ENCODE measurements at regions of chr1 and their contacts with region 1.

Region 1: GRCh38 chr1:206912445-206913095 is 9.2 kb downstream of the FCMR start:
- DNase-seq: peak; percentile 81
- H3K4me3 ChIP-seq: no peak overlapping the region; a peak in 1 of 4 replicates
- H3K27ac ChIP-seq: no peak overlapping the region
- H3K4me1 ChIP-seq: peaks cover 0 to 10% of the 10 kb centered on the region in 2 experiments; a peak in 1 of 4 replicates
- H3K27me3 ChIP-seq: peaks cover 43% of the 10 kb centered on the region
- CTCF ChIP-seq: peak; percentile 81
- EP300 ChIP-seq: no peak
- RAD21 ChIP-seq: peak; percentile 92

Region 2: DNA sequence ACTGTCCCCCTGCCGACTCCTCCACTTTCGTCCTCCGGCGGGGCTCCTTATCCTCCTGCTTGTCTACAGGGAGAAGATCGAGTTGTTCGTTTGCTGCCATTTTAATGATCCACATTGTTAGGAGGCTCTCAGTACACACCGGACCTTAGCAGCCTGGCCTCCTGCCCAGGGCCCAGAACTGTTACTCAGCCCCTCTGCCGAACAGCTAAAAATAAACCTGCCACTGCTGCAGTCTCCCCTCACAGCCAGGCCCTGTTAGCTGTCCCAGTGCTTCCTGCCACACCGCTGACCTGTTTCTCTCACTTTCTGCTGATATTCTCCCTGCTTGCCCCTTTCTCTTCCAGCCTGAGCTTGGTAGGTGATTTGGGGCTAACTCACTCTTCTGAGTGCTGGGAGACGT is 219.5 kb before region 1 on chr1:
- CTCF ChIA-PET with region 1: interaction called, 12 read pairs
- POLR2A ChIA-PET with region 1: no interaction called
- DNase-seq: no peak
- H3K4me3 ChIP-seq: no peak overlapping the region
- H3K27ac ChIP-seq: peak overlapping the region; percentile 45 to 69
- H3K4me1 ChIP-seq: peaks cover 43 to 51% of the 10 kb centered on the region in 2 experiments
- H3K27me3 ChIP-seq: no peaks in the 10 kb centered on the region
- CTCF ChIP-seq: no peak
- EP300 ChIP-seq: no peak
- RAD21 ChIP-seq: no peak

Region 3: DNA sequence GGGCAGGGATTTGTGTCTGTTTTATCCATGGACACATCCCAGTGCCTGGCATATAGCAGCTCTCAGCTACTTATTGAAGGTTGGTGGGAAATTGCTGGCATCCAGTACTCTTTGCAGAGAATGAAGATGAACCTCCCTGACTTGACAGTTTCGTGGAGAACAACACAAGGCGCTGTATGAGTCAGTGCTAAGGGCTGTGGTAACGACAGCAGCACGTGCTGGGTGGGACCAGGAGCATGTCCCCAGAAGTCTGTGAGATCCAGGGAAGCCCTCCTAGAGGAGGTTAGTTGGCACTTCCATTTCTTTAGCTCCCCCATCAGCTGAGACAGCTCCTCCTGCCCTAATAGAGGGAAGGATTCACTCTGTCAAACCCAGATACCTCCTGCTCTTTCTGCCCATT is 167.9 kb before region 1 on chr1:
- CTCF ChIA-PET with region 1: interaction called, 35 read pairs
- POLR2A ChIA-PET with region 1: no interaction called
- DNase-seq: no peak
- H3K4me3 ChIP-seq: no peak overlapping the region
- H3K27ac ChIP-seq: no peak overlapping the region
- H3K4me1 ChIP-seq: no peaks in the 10 kb centered on the region
- H3K27me3 ChIP-seq: no peaks in the 10 kb centered on the region
- CTCF ChIP-seq: no peak
- EP300 ChIP-seq: no peak
- RAD21 ChIP-seq: no peak

Region 4: GRCh38 chr1:206803221-206803730 is 109.3 kb before region 1 on chr1:
- CTCF ChIA-PET with region 1: interaction called, 23 read pairs
- POLR2A ChIA-PET with region 1: no interaction called
- DNase-seq: no peak
- H3K4me3 ChIP-seq: no peak overlapping the region
- H3K27ac ChIP-seq: no peak overlapping the region; a peak in 1 of 4 replicates
- H3K4me1 ChIP-seq: peaks cover 0 to 26% of the 10 kb centered on the region in 2 experiments; a peak in 2 of 4 replicates
- H3K27me3 ChIP-seq: peaks cover 17% of the 10 kb centered on the region; the same call in 1 of the 2 replicates
- CTCF ChIP-seq: no peak
- EP300 ChIP-seq: no peak
- RAD21 ChIP-seq: no peak

Region 5: DNA sequence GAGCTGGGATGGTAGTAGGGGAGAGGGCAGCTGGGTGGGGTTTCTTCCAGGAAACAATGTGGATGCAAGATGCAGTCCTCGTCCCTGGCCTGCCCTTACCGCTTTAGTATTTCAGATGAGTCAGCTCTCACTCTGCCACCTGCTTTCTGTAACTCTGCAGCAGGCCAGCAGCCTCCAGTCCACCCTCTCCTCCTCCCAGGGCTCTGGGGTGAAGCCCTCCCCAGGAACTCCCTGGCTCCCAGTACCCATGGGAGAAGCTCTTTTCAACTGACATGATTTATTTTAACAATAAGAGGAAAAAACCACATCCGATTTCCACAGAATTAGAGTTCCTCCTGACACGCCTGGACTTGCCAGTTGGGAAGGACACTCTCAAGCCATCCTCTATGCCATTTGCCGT is 86.2 kb before region 1 on chr1:
- CTCF ChIA-PET with region 1: no interaction called
- POLR2A ChIA-PET with region 1: no interaction called
- DNase-seq: no peak
- H3K4me3 ChIP-seq: no peak overlapping the region
- H3K27ac ChIP-seq: 0 out of 4 replicates have a peak overlapping the region, but pooled peaks of 1 of the 2 experiments have one; percentile 26
- H3K4me1 ChIP-seq: peaks cover 0 to 6% of the 10 kb centered on the region in 2 experiments; a peak in 1 of 4 replicates
- H3K27me3 ChIP-seq: no peaks in the 10 kb centered on the region; the same call in 1 of the 2 replicates
- CTCF ChIP-seq: no peak
- EP300 ChIP-seq: no peak
- RAD21 ChIP-seq: no peak

Region 6: DNA sequence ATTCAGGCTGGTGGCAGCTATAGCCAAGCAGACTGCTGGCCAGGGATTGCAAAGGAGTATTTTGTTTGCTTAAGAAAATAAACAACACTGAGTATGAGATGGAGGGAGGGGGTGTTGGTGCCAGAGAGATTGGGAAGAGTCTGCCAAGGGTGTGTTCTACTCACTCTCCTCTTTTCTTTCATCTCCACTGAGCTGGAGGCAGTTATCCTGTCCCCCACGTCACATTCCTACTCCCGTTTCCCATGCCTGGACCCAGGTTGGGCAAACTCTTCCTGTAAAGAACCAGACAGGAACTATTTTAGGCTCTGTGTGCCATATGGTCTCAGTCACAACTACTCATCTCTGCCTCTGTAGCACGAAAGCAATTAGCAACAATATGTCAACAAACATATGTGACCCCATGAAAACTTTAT is 16.7 kb before region 1 on chr1:
- CTCF ChIA-PET with region 1: interaction called, 13 read pairs
- POLR2A ChIA-PET with region 1: no interaction called
- DNase-seq: no peak
- H3K4me3 ChIP-seq: no peak overlapping the region
- H3K27ac ChIP-seq: no peak overlapping the region
- H3K4me1 ChIP-seq: no peaks in the 10 kb centered on the region
- H3K27me3 ChIP-seq: no peaks in the 10 kb centered on the region
- CTCF ChIP-seq: no peak
- EP300 ChIP-seq: no peak
- RAD21 ChIP-seq: no peak

Region 7: GRCh38 chr1:206982216-206982615 is 69.6 kb after region 1 on chr1:
- CTCF ChIA-PET with region 1: interaction called, 39 read pairs
- POLR2A ChIA-PET with region 1: no interaction called
- DNase-seq: peak; percentile 58
- H3K4me3 ChIP-seq: no peak overlapping the region
- H3K27ac ChIP-seq: no peak overlapping the region
- H3K4me1 ChIP-seq: no peaks in the 10 kb centered on the region
- H3K27me3 ChIP-seq: peaks cover 46% of the 10 kb centered on the region; the same call in 1 of the 2 replicates
- CTCF ChIP-seq: peak; percentile 62
- EP300 ChIP-seq: no peak
- RAD21 ChIP-seq: peak; percentile 85

Region 8: DNA sequence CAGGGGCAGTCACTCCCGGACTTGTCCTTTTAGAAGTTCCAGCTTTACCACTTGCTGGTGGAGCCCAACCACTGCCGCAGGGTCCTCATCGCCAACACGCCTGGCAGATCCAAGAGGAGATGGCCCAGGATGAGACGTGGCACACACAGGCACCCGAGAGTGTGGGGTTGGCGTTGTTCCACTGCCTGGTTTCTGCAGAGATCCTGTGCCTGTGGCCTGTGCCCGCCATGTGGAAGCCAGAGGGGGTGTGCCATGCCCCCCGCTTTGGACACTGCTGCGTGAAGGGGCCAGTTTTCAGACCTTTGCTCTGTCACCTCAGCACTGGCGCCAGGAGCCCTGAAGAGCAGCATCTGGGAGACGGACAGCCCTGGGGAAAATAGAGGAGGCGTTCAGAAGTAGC is 850.1 kb after region 1 on chr1:
- CTCF ChIA-PET with region 1: no interaction called
- POLR2A ChIA-PET with region 1: no interaction called
- DNase-seq: no peak
- H3K4me3 ChIP-seq: no peak overlapping the region
- H3K27ac ChIP-seq: no peak overlapping the region
- H3K4me1 ChIP-seq: no peaks in the 10 kb centered on the region
- H3K27me3 ChIP-seq: no peaks in the 10 kb centered on the region
- CTCF ChIP-seq: no peak
- EP300 ChIP-seq: no peak
- RAD21 ChIP-seq: no peak

Measured in SK-N-SH (cell line).